ENCODE measurements at regions of chr15 and their contacts with region 1.

Region 1: GRCh38 chr15:70974004-70974832 is 81.6 kb downstream of the LRRC49 start:
- DNase-seq: peak; percentile 83
- ATAC-seq: peak; percentile 90
- H3K4me3 ChIP-seq: no peak overlapping the region
- H3K27ac ChIP-seq: no peak overlapping the region; the same call in 1 of the 2 replicates
- H3K4me1 ChIP-seq: peaks cover 4% of the 10 kb centered on the region
- H3K27me3 ChIP-seq: no peaks in the 10 kb centered on the region
- CTCF ChIP-seq: peak; percentile 63
- POLR2A ChIP-seq: no peak
- RAD21 ChIP-seq: peak; percentile 75

Region 2: DNA sequence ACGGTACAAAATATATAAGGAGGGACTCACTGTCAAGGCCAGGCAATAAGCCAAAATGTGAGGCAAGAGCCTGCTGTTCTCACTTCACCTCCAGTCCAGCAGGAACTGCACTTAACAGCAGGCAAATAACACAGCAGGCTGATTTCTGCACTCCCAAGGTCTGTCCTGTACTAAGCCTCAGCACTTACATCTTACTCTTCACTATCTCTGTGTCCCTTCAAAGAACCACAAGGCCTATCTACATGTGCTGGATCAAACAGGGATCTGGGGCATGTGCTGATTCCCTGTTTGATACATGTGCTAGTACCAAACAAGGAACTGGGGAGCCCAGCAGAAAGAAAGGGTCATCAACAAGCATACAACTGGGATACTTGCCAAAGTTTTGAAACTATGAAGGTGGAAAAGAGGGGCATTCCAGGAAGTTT is 233.1 kb before region 1 on chr15:
- CTCF ChIA-PET with region 1: no interaction called
- POLR2A ChIA-PET with region 1: no interaction called
- dilution Hi-C with region 1: no loop called
- in situ Hi-C with region 1: no loop called
- intact Hi-C with region 1: no loop called
- DNase-seq: peak; percentile 90
- ATAC-seq: peak; percentile 73
- H3K4me3 ChIP-seq: no peak overlapping the region
- H3K27ac ChIP-seq: peak overlapping the region; percentile 62; the same call in 1 of the 2 replicates
- H3K4me1 ChIP-seq: peaks cover 7% of the 10 kb centered on the region
- H3K27me3 ChIP-seq: no peaks in the 10 kb centered on the region
- CTCF ChIP-seq: no peak
- POLR2A ChIP-seq: no peak
- RAD21 ChIP-seq: no peak

Region 3: GRCh38 chr15:70892002-70892914 is 82.0 kb before region 1 on chr15 and contains the starts of genes LRRC49 and THAP10:
- CTCF ChIA-PET with region 1: no interaction called
- POLR2A ChIA-PET with region 1: no interaction called
- dilution Hi-C with region 1: no loop called
- in situ Hi-C with region 1: no loop called
- intact Hi-C with region 1: loop called (anchors 5 kb)
- DNase-seq: peak; percentile 98
- ATAC-seq: peak; percentile 95
- H3K4me3 ChIP-seq: peak within 1 kb of the TSS; percentile 66
- H3K27ac ChIP-seq: peak within 1 kb of the TSS; percentile 64
- H3K4me1 ChIP-seq: peaks cover 6% of the 10 kb centered on the region; the same call in 1 of the 2 replicates
- H3K27me3 ChIP-seq: no peaks in the 10 kb centered on the region
- CTCF ChIP-seq: no peak
- POLR2A ChIP-seq: peak; percentile 52; the same call in 1 of the 2 replicates
- RAD21 ChIP-seq: no peak; the same call in 1 of the 2 replicates
- total RNA-seq, gene LRRC49: 16.8 and 19.2 TPM in 2 replicates
- total RNA-seq, gene THAP10: 2.3 and 3.6 TPM in 2 replicates

Region 4: GRCh38 chr15:71103102-71103676 is 129.0 kb after region 1 on chr15:
- CTCF ChIA-PET with region 1: interaction called, 4 read pairs
- POLR2A ChIA-PET with region 1: no interaction called
- dilution Hi-C with region 1: no loop called
- in situ Hi-C with region 1: no loop called
- intact Hi-C with region 1: loop called (anchors 5 kb)
- DNase-seq: peak; percentile 68
- ATAC-seq: peak; percentile 99
- H3K4me3 ChIP-seq: no peak overlapping the region
- H3K27ac ChIP-seq: no peak overlapping the region
- H3K4me1 ChIP-seq: peaks cover 3% of the 10 kb centered on the region; the same call in 1 of the 2 replicates
- H3K27me3 ChIP-seq: no peaks in the 10 kb centered on the region
- CTCF ChIP-seq: peak; percentile 63
- POLR2A ChIP-seq: no peak
- RAD21 ChIP-seq: peak; percentile 67

Region 5: DNA sequence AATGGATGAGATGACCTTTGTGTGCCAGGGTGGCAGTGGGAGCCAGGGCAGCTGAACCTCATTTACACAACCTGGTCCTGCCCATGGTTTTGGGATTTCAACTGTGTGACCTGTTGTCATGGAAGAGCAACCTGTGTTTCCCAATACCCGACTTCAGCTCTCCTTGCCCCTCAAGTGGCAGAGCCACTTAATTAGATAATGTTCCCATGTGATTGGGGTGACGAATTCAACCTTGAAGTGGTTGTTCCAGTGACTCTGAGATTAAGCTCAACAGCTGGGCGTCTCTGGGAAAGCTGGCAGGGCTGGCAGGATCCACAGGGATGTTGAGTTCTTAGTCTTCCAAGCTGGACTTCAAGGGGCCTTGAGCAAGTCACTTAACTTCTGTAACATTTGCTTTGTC is 212.0 kb after region 1 on chr15:
- CTCF ChIA-PET with region 1: no interaction called
- POLR2A ChIA-PET with region 1: no interaction called
- dilution Hi-C with region 1: no loop called
- in situ Hi-C with region 1: no loop called
- intact Hi-C with region 1: no loop called
- DNase-seq: no peak
- ATAC-seq: no peak
- H3K4me3 ChIP-seq: no peak overlapping the region
- H3K27ac ChIP-seq: no peak overlapping the region
- H3K4me1 ChIP-seq: 0 out of 2 replicates have a peak, but pooled peaks cover 4% of the 10 kb centered on the region
- H3K27me3 ChIP-seq: no peaks in the 10 kb centered on the region
- CTCF ChIP-seq: no peak
- POLR2A ChIP-seq: no peak
- RAD21 ChIP-seq: no peak

Region 6: GRCh38 chr15:71228403-71228802 is 254.2 kb after region 1 on chr15:
- CTCF ChIA-PET with region 1: no interaction called
- POLR2A ChIA-PET with region 1: no interaction called
- dilution Hi-C with region 1: no loop called
- in situ Hi-C with region 1: no loop called
- intact Hi-C with region 1: loop called (anchors 5 kb)
- DNase-seq: peak; percentile 70
- ATAC-seq: peak; percentile 92
- H3K4me3 ChIP-seq: no peak overlapping the region
- H3K27ac ChIP-seq: peak overlapping the region; percentile 15; the same call in 1 of the 2 replicates
- H3K4me1 ChIP-seq: peaks cover 18% of the 10 kb centered on the region
- H3K27me3 ChIP-seq: no peaks in the 10 kb centered on the region
- CTCF ChIP-seq: no peak
- POLR2A ChIP-seq: no peak
- RAD21 ChIP-seq: no peak

Region 7: DNA sequence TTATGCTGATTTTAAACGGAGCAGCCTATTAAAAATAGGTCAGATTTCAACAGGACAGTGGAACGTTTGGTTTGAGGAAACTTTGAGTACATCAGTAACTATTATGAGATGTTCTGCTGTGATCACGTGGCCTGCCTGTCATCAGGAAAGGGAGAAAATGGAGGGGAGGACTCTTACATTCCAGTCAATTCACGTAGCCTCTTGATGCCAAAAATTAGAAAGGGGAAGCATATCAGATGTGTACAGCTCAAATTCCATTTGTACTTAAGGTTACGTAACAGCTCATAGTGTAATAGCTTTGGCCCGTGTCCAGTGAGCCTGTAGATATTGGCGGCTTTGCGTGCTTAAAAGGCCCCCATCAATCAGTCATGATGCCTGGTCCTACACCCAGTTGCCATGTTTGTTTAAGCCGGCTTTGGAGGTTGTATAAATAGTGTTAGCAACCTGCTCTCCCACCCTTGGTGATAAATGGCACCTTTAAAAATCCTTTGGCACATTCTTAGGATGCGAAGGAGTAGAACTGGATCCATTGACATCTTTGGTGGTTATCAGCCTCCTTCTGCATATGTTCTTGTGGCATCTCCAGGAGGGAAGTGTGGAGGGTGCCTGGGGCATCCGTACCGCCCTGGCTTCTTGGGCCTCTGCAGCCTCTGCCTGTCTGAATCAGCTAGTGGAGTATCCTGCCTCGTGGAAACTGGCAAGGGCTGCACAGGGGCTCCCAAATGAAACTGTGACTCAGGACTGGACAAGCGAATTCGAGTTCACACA is 305.0 kb after region 1 on chr15:
- CTCF ChIA-PET with region 1: no interaction called
- POLR2A ChIA-PET with region 1: no interaction called
- dilution Hi-C with region 1: no loop called
- in situ Hi-C with region 1: no loop called
- intact Hi-C with region 1: loop called (anchors 1 kb)
- DNase-seq: peak; percentile 97
- ATAC-seq: peak; percentile 58
- H3K4me3 ChIP-seq: no peak overlapping the region
- H3K27ac ChIP-seq: peak overlapping the region; percentile 68
- H3K4me1 ChIP-seq: peaks cover 47% of the 10 kb centered on the region
- H3K27me3 ChIP-seq: no peaks in the 10 kb centered on the region
- CTCF ChIP-seq: no peak
- POLR2A ChIP-seq: no peak
- RAD21 ChIP-seq: no peak

Region 8: DNA sequence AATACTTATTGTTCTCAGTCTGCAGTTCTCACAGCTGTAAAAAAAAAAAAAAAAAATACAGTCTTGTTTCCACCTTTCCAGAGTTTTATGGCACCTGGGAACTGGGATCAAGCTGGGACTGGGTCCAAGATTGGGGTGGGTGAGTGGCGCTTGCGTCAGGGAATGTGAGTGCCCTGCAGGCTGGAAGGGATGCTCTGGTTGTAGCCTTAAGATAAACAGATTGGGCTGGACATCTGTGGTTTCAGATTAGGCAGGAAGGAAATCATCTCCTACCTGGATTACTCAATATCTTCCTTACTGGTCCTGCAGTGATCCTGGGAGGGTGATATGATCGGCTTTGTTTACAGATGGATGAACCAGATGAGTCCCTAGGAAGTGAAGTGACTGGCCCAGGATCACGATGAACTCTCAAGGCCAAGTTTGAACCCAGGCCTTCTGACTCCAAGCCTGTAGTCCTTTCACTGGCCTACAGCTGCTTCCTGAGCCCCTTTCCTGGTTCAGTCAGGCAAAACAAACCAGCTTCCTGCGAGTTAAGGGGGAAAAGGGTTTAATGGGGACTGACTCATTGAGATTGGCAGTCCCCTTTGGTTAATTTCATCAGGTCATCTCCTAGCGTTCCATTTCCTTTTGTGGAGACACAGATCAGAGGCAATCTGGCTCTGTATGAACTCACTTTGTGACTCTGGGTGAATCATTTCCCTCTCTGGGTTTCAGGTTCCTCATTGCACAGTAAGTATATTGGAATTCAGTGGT is 320.8 kb after region 1 on chr15:
- CTCF ChIA-PET with region 1: no interaction called
- POLR2A ChIA-PET with region 1: no interaction called
- dilution Hi-C with region 1: no loop called
- in situ Hi-C with region 1: no loop called
- intact Hi-C with region 1: loop called (anchors 1 kb)
- DNase-seq: peak; percentile 100
- ATAC-seq: peak; percentile 77
- H3K4me3 ChIP-seq: no peak overlapping the region
- H3K27ac ChIP-seq: peak overlapping the region; percentile 98
- H3K4me1 ChIP-seq: peaks cover 28% of the 10 kb centered on the region
- H3K27me3 ChIP-seq: no peaks in the 10 kb centered on the region
- CTCF ChIP-seq: no peak
- POLR2A ChIP-seq: no peak
- RAD21 ChIP-seq: no peak; the same call in 1 of the 2 replicates

Region 9: DNA sequence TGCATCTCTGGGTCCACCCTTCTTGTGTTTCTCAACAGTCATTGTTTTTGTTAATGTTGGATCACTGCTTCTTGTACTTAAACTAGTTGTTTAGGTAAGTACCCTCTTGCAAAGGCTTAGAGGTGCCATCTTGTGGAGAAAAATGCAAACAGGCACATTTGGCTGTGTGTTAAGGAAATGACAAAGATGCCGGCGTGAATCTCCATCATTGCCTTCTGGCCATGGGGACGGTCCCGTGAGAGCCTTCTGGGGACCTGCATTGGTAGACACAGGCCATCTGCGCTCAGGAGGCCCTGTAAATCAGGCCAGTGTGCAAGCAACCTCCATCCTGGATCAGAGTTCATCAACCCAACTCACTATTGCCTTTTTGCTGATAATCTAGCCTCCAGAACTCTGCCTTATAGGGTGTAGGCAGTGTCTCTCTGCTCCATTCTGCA is 677.5 kb after region 1 on chr15:
- CTCF ChIA-PET with region 1: no interaction called
- POLR2A ChIA-PET with region 1: no interaction called
- dilution Hi-C with region 1: no loop called
- in situ Hi-C with region 1: no loop called
- intact Hi-C with region 1: loop called (anchors 1 kb)
- DNase-seq: peak; percentile 86
- ATAC-seq: peak; percentile 93
- H3K4me3 ChIP-seq: no peak overlapping the region
- H3K27ac ChIP-seq: no peak overlapping the region
- H3K4me1 ChIP-seq: peaks cover 6% of the 10 kb centered on the region
- H3K27me3 ChIP-seq: no peaks in the 10 kb centered on the region
- CTCF ChIP-seq: peak; percentile 74
- POLR2A ChIP-seq: no peak
- RAD21 ChIP-seq: peak; percentile 82